ENCODE measurements at regions of chr11 and their contacts with region 1.

Region 1: DNA sequence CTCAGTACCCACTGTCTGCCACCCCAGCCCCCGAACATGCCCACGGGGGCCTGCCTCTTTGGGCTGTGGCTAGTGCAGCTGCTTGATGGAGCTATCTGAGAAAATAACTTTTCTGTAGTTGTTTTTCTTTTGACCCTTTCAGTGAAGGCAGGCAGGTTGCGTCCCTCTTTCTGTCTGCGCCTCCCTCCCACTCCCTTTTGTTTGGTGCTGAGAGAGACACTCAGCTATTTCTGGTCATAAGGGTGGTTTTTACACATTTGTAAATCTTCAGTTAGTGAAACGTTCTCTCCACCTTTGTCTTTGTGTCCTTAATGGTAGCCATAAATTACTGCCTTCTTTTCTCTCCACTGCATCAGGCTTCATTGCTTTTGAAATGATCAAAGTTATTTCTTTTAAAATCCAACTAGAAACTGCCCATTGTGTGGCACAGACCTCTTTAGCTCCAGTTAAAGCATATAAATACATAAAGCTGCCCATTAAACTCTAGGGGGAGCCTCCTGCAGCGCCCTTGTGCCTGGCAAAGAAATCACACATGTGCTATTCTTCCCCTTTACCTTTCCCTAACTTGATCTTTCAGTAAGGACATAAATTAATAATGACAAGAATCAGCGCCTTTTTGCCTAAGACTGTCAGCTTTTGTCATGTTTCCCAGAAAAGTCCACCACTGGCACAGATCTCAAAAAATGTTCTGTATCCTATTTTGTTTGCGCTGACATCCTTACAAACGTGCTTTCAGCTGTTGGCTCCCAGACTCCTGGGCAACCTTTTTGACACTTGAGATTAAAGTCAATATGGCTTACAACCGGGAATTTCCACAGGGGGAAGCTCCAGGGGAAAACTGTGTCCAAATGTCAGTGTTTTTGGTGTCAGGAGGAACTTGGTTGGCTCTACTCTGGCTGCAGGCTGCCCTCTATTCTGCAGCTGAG is 1.7 kb upstream of the SCUBE2 start:
- DNase-seq: no peak
- ATAC-seq: no peak
- H3K4me3 ChIP-seq: no peak overlapping the region
- H3K27ac ChIP-seq: no peak overlapping the region
- H3K4me1 ChIP-seq: no peaks in the 10 kb centered on the region
- H3K27me3 ChIP-seq: peaks cover 0 to 32% (median 4%) of the 10 kb centered on the region in 3 donors
- CTCF ChIP-seq: no peak

Region 2: DNA sequence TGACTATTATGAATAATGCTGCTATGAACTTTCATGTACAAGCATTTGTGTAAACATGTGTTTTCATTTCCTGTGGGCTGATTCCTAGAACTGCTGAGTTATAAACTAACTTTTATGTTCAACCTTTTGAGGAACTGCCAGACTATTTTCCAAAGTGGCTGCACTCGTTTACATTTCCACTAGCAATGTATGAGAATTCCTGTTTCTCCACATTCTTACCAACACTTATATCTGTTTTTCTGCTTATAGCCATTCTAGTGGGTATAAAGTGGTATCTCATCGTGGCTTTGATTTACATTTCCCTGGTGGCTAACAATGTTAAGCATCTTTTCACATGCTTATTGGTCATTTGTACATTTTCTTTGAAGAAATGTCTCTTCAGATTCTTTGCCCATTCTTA is 33.5 kb after region 1 on chr11:
- intact Hi-C with region 1: loop called in 1 of 2 experiments (anchors 5 kb)
- DNase-seq: no peak
- ATAC-seq: no peak
- H3K4me3 ChIP-seq: no peak overlapping the region
- H3K27ac ChIP-seq: no peak overlapping the region
- H3K4me1 ChIP-seq: peaks cover 6% of the 10 kb centered on the region
- H3K27me3 ChIP-seq: no peaks in the 10 kb centered on the region
- CTCF ChIP-seq: no peak

Measured in psoas muscle (tissue), 8 donors.